Natural killer cell (primary cell): ENCODE measurements at regions of chr12 and their contacts with region 1.

Region 1: DNA sequence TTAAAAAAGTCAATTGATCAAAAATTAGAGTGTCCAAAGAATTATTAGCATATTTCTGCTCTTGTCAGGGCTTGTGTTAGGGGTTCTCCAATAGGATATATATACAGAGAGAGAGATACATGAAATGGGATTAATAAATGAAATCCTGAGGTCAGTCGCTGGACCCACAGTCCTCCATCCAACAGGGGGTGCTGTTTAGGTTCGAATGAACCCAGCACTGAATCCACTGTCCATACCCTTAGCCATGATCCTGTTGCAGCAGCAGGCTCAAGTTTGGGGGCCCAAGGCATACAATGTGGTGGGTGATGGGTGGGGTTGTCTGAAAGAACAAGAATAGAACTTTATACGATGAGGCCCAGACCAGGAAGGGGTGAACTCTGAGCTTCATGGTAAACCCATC is 780 bp upstream of the MYO1H start:
- DNase-seq: no peak
- ATAC-seq: peak in 1 of 3 donors; percentile 44
- H3K4me3 ChIP-seq: no peak overlapping the region
- H3K4me3 Mint-ChIP-seq: no peak overlapping the region
- H3K27ac ChIP-seq: no peak overlapping the region
- H3K27ac Mint-ChIP-seq: no peak overlapping the region
- H3K4me1 ChIP-seq: no peaks in the 10 kb centered on the region
- H3K4me1 Mint-ChIP-seq: no peaks in the 10 kb centered on the region
- H3K27me3 ChIP-seq: no peaks in the 10 kb centered on the region
- H3K27me3 Mint-ChIP-seq: peaks cover 4 to 21% of the 10 kb centered on the region in 2 donors
- CTCF ChIP-seq: no peak

Region 2: GRCh38 chr12:109069307-109070231 is 277.4 kb before region 1 on chr12:
- intact Hi-C with region 1: no loop called
- DNase-seq: no peak
- ATAC-seq: no peak
- H3K4me3 ChIP-seq: no peak overlapping the region
- H3K4me3 Mint-ChIP-seq: no peak overlapping the region
- H3K27ac ChIP-seq: no peak overlapping the region
- H3K27ac Mint-ChIP-seq: no peak overlapping the region
- H3K4me1 ChIP-seq: no peaks in the 10 kb centered on the region
- H3K4me1 Mint-ChIP-seq: peaks cover 0 to 5% of the 10 kb centered on the region in 2 donors
- H3K27me3 ChIP-seq: no peaks in the 10 kb centered on the region
- H3K27me3 Mint-ChIP-seq: no peaks in the 10 kb centered on the region
- CTCF ChIP-seq: no peak

Region 3: DNA sequence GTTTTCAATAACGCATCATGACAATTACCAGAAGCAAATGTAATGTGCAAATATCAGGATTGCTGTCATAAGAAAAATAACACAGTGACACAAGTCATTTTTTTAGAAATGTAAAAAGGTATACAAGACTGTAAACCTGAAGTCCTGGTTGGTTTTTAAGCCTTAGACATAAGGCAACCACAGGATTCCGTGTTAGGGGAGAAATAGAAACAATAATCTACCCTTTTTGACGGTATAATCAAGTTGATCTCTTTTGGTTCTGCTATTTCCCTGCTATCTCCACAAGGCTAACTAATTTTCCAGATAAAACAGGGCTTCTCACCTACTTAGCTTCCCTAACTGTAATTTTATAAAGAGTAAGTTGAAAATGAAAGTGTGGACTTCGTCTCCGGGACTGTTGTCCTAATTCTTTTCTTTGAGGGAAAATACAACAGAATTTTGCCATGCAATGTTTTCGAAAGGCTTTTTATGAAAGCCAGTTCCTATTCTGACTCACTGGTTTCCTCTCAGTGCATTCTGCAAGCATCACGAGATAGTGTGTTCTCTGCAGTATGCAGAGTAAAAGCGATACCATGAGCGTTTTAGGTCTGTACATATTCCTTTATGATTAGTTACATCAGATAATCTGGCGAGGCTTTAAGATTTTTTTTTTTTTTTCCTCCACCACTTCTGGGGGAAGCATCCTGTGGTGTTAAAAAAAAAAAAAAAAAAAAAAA is 11.4 kb after region 1 on chr12:
- intact Hi-C with region 1: no loop called
- DNase-seq: no peak
- ATAC-seq: no peak
- H3K4me3 ChIP-seq: no peak overlapping the region
- H3K4me3 Mint-ChIP-seq: peak overlapping the region; percentile 6
- H3K27ac ChIP-seq: no peak overlapping the region
- H3K27ac Mint-ChIP-seq: no peak overlapping the region
- H3K4me1 ChIP-seq: no peaks in the 10 kb centered on the region
- H3K4me1 Mint-ChIP-seq: peaks cover 0 to 7% of the 10 kb centered on the region in 2 donors
- H3K27me3 ChIP-seq: no peaks in the 10 kb centered on the region
- H3K27me3 Mint-ChIP-seq: peaks cover 5 to 36% of the 10 kb centered on the region in 2 donors
- CTCF ChIP-seq: no peak

Region 4: GRCh38 chr12:109393437-109394345 is 46.8 kb after region 1 on chr12:
- intact Hi-C with region 1: loop called (anchors 5 kb)
- DNase-seq: peak in 1 of 2 donors; percentile 73
- ATAC-seq: peak; percentile 77 to 90 (median 84)
- H3K4me3 ChIP-seq: no peak overlapping the region
- H3K4me3 Mint-ChIP-seq: no peak overlapping the region
- H3K27ac ChIP-seq: no peak overlapping the region
- H3K27ac Mint-ChIP-seq: no peak overlapping the region
- H3K4me1 ChIP-seq: no peaks in the 10 kb centered on the region
- H3K4me1 Mint-ChIP-seq: peaks cover 0 to 5% of the 10 kb centered on the region in 2 donors
- H3K27me3 ChIP-seq: no peaks in the 10 kb centered on the region
- H3K27me3 Mint-ChIP-seq: peaks cover 25 to 31% of the 10 kb centered on the region in 2 donors
- CTCF ChIP-seq: peak; percentile 88